Cardiac septum (tissue), 1 donor: ENCODE measurements at regions of chr1 and their contacts with region 1.

Region 1: DNA sequence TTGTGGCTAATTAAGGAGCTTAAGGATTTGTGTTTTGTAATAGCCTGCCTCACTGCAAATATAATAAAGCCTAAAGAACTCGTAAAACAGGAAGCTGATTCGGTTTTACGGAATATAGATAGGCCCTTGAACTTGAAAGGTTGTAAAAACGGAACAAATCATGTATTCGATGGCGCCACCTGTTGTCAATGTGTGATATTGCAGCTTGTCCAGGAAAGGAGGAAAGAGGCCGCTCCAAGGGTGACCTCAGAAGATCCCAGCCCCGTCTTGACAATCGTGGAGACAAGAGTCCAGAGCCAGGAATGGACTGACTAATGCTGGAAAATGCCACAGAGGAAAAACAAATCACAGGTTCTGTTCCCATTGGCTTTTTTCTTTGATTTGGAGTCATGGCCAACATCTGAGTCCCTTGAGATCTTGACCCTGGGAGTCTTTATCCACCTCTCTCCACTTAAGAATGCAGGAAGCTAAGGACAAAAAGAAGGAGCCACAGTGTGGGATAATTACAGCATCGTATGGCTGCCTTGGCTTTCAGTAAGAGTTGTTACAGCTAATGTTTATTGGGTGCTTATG is 7.0 kb upstream of the IGSF21 start:
- DNase-seq: no peak

Region 2: DNA sequence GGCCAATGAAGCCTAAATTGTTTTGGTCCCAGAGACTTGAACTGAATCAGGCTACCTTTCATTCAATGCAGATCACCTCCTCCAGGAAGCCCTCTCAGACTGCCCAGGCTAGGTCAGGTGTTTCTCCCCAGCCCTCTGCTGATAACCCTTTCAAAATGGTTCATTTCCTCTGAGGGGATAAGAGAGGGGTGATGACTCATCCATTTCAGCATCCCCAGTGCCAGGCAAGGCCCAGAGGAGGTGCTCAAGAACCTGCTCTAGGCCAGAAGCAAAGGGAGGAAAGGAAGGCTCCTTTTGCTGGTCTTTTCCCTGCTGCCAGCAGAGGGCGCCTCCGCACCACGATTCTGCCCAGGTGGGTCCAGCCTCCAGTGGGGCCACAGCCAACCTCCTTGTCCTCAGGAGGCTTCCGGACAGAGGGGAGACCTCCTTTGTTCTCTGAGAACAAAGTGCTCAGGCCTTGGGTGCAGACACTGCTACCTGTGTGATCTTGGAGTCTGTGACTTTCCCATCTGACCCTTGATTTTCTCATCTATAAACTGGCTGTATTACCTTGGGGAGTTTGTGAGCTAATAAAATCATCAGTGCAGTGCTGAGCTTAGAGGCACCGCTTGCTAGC is 606.4 kb before region 1 on chr1:
- intact Hi-C with region 1: loop called (anchors 10 kb)
- DNase-seq: peak; percentile 82

Region 3: GRCh38 chr1:17653728-17654351 is 446.7 kb before region 1 on chr1:
- intact Hi-C with region 1: loop called (anchors 5 kb)
- DNase-seq: no peak

Region 4: DNA sequence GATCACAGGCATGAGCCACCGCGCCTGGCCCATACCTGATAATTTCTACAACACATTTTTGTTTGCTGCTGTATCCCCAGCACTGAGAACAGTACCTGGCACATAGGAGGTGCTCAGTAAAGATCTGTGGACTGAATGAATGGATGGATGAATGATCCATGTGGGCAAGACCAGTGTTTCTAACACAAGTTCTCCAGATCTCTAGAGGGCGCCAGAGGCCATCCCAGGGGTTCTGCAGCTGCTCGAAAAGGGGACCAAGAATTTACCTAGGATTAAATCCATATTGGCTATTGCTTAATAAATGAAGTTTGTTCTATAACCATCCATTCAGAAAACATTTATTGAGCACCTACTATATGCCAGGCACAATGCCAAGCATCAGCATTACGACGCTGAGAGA is 177.7 kb before region 1 on chr1:
- intact Hi-C with region 1: loop called (anchors 5 kb)
- DNase-seq: no peak

Region 5: GRCh38 chr1:18041102-18041501 is 59.5 kb before region 1 on chr1:
- intact Hi-C with region 1: no loop called
- DNase-seq: no peak